Activated CD4-positive, alpha-beta memory T cell treated with anti-CD3 and anti-CD28 coated beads for 36 hours (primary cell): ENCODE measurements at regions of chr14 and their contacts with region 1.

Region 1: DNA sequence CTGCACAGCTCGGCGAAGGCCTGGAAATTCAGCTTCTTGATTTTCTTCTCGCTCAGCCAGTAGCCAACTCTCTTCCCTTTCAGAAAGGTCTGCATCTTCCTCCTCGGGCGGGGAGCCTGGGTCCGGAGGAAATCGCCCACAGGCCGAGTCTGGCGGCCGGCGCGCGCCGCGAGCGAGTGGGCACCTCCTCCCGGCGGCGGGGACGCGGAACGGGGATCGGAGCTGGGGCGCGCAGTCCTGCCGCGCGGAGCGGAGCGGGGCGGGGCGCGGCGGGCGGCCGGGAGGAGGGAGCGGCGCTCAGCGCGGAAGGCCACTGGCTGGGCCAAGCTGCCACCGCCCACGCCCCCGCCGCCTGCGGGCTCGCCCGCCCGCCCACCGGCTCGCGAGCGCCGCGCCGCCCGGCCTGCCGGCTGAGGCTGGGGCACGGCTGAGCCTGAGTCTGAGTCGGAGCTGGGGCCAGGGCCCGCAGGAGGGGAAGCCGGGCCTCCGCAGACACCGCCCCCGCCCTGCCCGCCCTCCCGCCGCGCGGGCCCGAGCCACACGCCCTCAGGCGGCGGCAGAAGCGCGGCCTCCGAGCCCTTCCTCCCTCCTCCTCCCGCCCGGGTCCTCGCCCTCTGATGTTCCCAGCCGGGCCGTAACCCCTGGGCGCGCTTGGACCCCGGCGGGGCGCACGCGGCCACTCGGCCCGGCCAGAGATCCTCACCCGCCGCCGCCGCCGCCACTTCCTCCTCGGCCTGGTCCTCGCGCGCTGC is 480 bp downstream of the ITPK1 start:
- DNase-seq: peak; percentile 87
- H3K4me3 Mint-ChIP-seq: peak overlapping the region; percentile 83
- H3K27ac Mint-ChIP-seq: no peak overlapping the region
- H3K4me1 Mint-ChIP-seq: peaks cover 24% of the 10 kb centered on the region
- H3K27me3 Mint-ChIP-seq: no peaks in the 10 kb centered on the region

Region 2: DNA sequence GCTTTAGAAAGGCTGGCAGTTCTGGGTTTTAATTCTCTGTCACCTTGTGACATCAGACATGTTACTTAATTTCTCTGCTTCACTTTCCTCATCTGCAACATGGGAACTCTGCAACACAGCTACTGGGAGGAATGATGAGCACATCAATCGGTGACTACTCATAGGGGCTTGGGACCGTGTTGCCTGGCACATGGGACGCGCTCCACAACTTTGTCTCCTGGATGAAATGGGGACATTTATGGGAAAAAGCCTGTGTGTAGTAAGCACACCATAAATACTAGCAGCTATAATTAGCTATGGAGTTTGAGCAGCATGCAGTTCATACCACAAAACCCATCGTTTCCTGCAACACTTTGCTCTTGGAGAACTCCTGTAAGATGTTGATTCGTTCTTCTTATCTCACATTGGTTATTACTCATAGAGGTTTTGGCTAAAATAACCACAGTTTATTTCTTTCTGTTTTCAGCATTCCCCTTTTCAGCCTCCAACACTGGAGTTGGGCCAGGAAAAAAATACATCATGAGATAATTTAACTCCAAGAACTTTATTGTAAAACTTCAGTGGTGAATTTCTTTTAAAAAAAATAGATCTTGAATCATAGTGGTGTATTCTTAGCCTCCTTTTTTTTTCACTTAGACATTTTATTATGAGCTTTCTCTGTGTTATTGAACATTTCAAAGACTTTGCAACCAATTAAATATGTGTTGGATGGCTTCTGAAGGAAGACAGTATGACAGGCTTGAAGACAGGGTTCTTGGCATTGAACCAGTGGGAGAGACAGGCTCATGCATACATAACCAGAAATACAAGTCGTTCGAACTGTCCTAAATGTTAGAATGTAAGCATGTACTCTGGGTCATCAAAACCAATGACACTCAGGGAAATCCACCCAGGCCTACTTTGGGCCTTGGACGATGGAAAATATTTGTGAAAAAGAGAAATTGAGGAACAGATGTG is 529.0 kb before region 1 on chr14:
- CTCF ChIA-PET with region 1: no interaction called
- POLR2A ChIA-PET with region 1: no interaction called
- intact Hi-C with region 1: no loop called
- DNase-seq: peak; percentile 34
- H3K4me3 Mint-ChIP-seq: peak overlapping the region; percentile 25
- H3K27ac Mint-ChIP-seq: peak overlapping the region; percentile 66
- H3K4me1 Mint-ChIP-seq: peaks cover 69% of the 10 kb centered on the region
- H3K27me3 Mint-ChIP-seq: no peaks in the 10 kb centered on the region

Region 3: GRCh38 chr14:93064411-93065323 is 50.6 kb before region 1 on chr14:
- CTCF ChIA-PET with region 1: interaction called, 3 read pairs
- POLR2A ChIA-PET with region 1: no interaction called
- intact Hi-C with region 1: loop called (anchors 5 kb)
- DNase-seq: no peak
- H3K4me3 Mint-ChIP-seq: no peak overlapping the region
- H3K27ac Mint-ChIP-seq: no peak overlapping the region
- H3K4me1 Mint-ChIP-seq: peaks cover 33% of the 10 kb centered on the region
- H3K27me3 Mint-ChIP-seq: no peaks in the 10 kb centered on the region

Region 4: DNA sequence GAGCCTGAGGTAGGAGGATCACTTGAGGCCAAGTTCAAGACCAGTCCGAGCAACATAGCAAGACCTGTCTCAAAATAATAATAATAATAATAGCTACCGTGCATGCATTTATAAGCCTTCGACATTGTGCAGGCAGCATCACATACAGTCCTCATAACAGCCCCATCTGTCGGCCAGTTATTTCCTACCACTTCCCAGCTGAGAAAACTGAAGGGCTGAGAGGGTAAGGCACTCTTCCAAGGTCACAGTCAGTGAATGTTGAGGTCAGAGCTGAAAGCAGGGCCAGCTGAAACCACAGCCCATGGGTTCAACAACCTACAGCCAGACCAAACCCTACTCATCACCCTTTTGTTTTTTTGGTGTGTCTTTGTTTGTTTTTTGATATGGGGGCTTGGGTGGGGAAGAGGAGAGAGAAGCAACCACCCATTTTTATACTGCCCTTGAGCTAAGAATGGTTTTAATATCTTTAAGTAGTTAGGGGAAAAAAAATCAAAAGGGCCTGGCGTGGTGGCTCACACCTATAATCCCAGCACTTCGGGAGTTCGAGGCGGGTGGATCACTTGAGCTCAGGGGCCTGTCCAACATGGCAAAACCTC is 17.3 kb after region 1 on chr14:
- CTCF ChIA-PET with region 1: interaction called, 152 read pairs
- POLR2A ChIA-PET with region 1: interaction called, 3 read pairs
- intact Hi-C with region 1: no loop called
- DNase-seq: peak; percentile 21
- H3K4me3 Mint-ChIP-seq: no peak overlapping the region
- H3K27ac Mint-ChIP-seq: no peak overlapping the region
- H3K4me1 Mint-ChIP-seq: no peaks in the 10 kb centered on the region
- H3K27me3 Mint-ChIP-seq: peaks cover 4% of the 10 kb centered on the region

Region 5: GRCh38 chr14:93160353-93160801 is 45.1 kb after region 1 on chr14:
- CTCF ChIA-PET with region 1: interaction called, 10 read pairs
- POLR2A ChIA-PET with region 1: no interaction called
- intact Hi-C with region 1: no loop called
- DNase-seq: peak; percentile 30
- H3K4me3 Mint-ChIP-seq: no peak overlapping the region
- H3K27ac Mint-ChIP-seq: no peak overlapping the region
- H3K4me1 Mint-ChIP-seq: no peaks in the 10 kb centered on the region
- H3K27me3 Mint-ChIP-seq: no peaks in the 10 kb centered on the region

Region 6: GRCh38 chr14:93206793-93207467 is 91.7 kb after region 1 on chr14 and contains the starts of genes GON7 and UBR7:
- CTCF ChIA-PET with region 1: interaction called, 10 read pairs
- POLR2A ChIA-PET with region 1: interaction called, 5 read pairs
- intact Hi-C with region 1: loop called (anchors 1 kb)
- DNase-seq: peak; percentile 94
- H3K4me3 Mint-ChIP-seq: peak within 1 kb of the TSS; percentile 99
- H3K27ac Mint-ChIP-seq: peak within 1 kb of the TSS; percentile 94
- H3K4me1 Mint-ChIP-seq: peaks cover 32% of the 10 kb centered on the region
- H3K27me3 Mint-ChIP-seq: no peaks in the 10 kb centered on the region
- total RNA-seq, gene GON7: 12.4 to 12.5 TPM
- total RNA-seq, gene UBR7: 48.0 to 51.6 TPM

Region 7: DNA sequence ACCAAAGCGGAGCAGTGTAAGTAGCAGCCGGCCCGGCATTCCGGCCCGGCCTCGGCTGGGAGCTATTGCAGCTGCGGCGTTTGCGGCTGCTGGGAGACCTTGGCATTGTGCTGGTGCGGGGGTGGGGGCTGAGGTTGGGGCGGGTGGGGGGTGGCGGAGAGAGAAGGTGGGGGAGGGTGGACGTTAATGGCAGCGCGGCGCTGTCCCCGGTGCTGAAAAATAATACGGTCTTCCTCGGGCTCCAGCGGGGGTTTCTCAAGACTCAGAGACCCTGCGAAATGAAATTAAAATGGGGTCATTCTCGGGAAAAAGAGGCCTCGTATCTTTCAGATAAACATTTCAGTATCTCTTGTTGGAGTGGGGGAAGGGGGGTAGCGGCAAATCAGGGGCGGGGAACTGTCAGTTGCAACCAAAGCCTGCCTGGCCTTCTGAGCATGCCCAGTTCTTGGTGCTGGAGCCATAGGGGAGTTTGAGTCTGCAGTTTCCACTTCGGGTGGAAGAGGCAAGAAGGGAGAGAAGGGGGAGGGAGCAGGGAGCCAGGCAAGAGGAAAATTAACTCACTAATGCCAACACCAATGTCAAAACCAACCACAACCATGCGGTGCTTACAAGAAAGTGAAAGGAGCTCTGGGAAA is 315.9 kb after region 1 on chr14:
- CTCF ChIA-PET with region 1: no interaction called
- POLR2A ChIA-PET with region 1: no interaction called
- intact Hi-C with region 1: no loop called
- DNase-seq: no peak
- H3K4me3 Mint-ChIP-seq: no peak overlapping the region
- H3K27ac Mint-ChIP-seq: no peak overlapping the region
- H3K4me1 Mint-ChIP-seq: peaks cover 3% of the 10 kb centered on the region
- H3K27me3 Mint-ChIP-seq: peaks cover 31% of the 10 kb centered on the region

Region 8: GRCh38 chr14:93619176-93619793 is 504.0 kb after region 1 on chr14:
- CTCF ChIA-PET with region 1: no interaction called
- POLR2A ChIA-PET with region 1: no interaction called
- intact Hi-C with region 1: loop called (anchors 10 kb)
- DNase-seq: peak; percentile 42
- H3K4me3 Mint-ChIP-seq: no peak overlapping the region
- H3K27ac Mint-ChIP-seq: no peak overlapping the region
- H3K4me1 Mint-ChIP-seq: no peaks in the 10 kb centered on the region
- H3K27me3 Mint-ChIP-seq: peaks cover 8% of the 10 kb centered on the region

Region 9: DNA sequence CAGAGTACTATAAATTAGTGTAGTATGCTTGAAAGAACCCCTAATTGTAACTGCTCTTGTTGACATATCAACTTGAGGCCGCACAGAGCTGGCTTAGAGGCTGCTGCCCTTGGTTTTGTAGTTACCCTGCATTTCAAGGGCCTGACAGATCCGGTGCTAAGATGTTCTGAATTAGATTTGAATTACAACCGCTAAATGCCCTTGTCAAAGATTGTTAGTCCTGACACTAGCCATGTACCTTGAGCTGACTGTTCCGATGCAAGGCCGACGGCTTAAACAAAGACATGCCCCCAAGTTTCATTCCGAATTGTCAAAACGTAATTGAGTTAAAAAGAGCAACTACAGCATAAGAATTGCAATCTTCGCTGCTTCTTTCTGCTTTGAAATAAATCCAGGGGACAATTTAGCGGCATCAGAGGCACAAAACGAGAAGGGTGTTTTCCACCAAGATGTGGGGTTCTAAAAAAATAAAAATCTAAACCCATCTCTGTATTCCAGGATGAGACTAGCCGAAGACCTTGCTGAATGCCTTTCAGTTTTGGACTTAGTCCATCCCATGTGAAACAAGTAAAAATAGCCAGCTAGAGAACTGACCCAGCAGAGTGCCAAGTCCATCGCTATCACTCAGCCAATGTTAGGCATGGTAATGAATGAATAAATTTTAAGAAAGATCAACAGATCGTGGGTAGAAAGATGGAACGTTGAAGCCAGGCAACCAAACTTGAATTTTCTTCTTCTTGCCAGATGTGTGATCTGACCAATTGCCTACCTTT is 1893.4 kb after region 1 on chr14:
- CTCF ChIA-PET with region 1: no interaction called
- POLR2A ChIA-PET with region 1: no interaction called
- intact Hi-C with region 1: no loop called
- DNase-seq: no peak
- H3K4me3 Mint-ChIP-seq: no peak overlapping the region
- H3K27ac Mint-ChIP-seq: no peak overlapping the region
- H3K4me1 Mint-ChIP-seq: no peaks in the 10 kb centered on the region
- H3K27me3 Mint-ChIP-seq: peaks cover 19% of the 10 kb centered on the region